Left cardiac atrium (tissue), 4 donors: ENCODE measurements at regions of chr11 and their contacts with region 1.

Region 1: DNA sequence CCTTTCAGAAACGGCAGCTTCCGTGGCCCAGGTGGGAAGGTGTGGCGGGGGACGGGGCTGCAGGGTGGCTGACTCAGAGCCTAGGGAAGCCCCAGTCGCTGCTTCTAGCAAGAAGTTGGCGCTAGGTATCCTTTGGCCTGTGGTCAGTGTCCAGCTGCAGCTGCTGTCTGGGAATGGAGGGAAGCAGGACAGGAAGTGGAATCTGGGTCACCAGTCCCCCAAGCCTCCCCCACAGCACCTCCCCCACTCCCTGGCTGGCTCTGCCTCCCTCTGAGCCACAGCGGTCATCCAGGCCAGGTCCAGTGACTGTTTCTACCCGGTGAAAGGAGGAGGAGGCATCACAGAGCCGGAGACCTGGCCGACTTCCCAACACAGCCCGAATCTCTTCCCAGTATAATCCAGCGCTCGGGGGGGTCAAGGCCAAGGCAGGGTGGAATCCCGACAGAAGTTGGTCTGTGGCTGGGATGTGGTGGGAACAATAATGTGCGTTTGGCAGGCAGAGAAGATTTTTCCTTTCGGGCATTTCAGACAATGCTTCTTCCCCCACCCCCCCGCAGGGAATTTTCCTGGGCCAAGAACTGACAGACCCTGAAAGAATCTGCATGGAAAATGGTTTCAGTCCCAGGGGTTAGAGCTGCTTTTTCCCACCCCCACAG is 45.1 kb downstream of the C11orf96 start:
- DNase-seq: peak; percentile 94
- ATAC-seq: peak; percentile 87 to 92

Region 2: DNA sequence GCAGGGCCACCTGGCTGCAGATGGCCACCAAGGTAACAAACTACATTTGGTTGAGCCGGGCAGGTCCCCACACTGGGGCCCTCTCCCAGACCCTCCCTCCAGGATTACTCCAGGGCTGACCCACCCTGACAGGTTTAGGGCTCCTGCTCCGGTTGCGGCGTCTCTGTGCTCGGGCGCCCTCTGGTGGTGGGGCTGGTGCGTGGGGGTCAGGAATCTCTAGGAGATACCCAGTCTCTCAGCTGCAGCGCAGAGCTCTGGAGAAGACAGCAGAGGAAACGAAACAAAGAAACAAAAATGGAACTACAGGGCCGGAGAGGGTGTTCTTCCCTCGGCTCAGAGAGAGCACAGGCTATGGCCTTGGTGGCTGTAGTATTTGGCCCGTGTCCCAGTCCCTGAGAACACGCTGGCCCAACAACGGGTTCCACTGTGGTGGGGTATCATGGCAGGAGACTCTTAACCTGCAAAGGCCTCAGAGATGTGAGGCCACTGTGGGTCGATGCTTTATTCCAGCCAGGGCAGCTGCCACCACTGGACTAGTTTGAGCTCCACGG is 42.7 kb before region 1 on chr11:
- intact Hi-C with region 1: loop called in 1 of 2 experiments (anchors 5 kb)
- DNase-seq: peak; percentile 72
- ATAC-seq: peak; percentile 20 to 31

Region 3: GRCh38 chr11:44029977-44030911 is 42.7 kb after region 1 on chr11:
- intact Hi-C with region 1: loop called in 1 of 2 experiments (anchors 5 kb)
- DNase-seq: peak; percentile 56
- ATAC-seq: peak; percentile 77 to 84